ENCODE measurements at regions of chr1 and their contacts with region 1.

Region 1: GRCh38 chr1:12320516-12320915 is 90.7 kb downstream of the VPS13D start:
- DNase-seq: no peak

Region 2: GRCh38 chr1:11114966-11115365 is 1205.5 kb before region 1 on chr1:
- intact Hi-C with region 1: no loop called
- DNase-seq: no peak

Region 3: DNA sequence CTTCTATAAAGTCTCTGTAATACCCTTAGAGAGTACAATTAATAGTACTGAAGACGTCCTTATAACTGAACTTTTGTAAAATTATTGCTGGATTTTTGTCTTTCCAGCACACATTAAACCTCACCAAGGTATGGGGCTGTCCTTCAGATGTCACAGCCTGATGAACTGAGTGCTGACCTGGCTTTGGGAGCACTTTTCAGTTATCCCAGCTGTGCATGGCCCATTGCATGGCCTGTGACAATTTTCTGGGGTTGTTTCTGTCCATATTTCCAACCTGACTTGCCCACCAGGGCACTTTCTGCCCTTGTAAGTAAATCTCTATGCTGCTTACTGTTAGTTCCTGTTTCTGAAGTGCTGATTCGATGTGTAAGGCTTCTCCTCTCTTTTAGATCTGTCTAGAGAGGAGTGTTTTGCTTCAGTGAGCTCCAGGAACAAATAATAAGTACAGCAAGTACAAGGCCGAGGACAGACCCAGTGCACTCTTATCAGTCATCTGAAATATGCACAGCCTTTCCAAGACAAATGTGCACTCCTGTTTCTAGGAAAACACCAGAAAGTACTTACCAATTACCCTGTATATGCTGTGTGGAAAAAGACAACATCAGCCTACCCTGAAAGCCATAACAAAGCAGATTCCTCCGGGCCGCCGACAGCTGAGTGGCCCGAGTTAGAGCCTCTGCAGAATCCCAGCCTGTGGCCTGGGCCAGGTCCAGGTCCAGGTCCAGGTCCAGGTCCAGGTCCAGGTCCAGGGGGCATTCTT is 175.8 kb after region 1 on chr1:
- intact Hi-C with region 1: no loop called
- DNase-seq: no peak

Region 4: GRCh38 chr1:12658531-12659453 is 338.3 kb after region 1 on chr1:
- intact Hi-C with region 1: loop called in 1 of 2 experiments (anchors 5 kb)
- DNase-seq: peak; percentile 85

Measured in posterior vena cava (tissue), 2 donors.